ENCODE measurements at regions of chr12 and their contacts with region 1.

Region 1: GRCh38 chr12:32025906-32026305 is 66.7 kb downstream of the RESF1 start:
- DNase-seq: no peak
- H3K4me3 ChIP-seq: no peak overlapping the region
- H3K4me1 ChIP-seq: peaks cover 12% of the 10 kb centered on the region
- H3K27me3 ChIP-seq: no peaks in the 10 kb centered on the region

Region 2: GRCh38 chr12:31682136-31682962 is 343.6 kb before region 1 on chr12:
- in situ Hi-C with region 1: loop called (anchors 25 kb)
- DNase-seq: peak; percentile 83
- H3K4me3 ChIP-seq: no peak overlapping the region
- H3K4me1 ChIP-seq: no peaks in the 10 kb centered on the region
- H3K27me3 ChIP-seq: no peaks in the 10 kb centered on the region

Measured in HAP-1 (cell line).